PC-3 (cell line): ENCODE measurements at regions of chr15 and their contacts with region 1.

Region 1: DNA sequence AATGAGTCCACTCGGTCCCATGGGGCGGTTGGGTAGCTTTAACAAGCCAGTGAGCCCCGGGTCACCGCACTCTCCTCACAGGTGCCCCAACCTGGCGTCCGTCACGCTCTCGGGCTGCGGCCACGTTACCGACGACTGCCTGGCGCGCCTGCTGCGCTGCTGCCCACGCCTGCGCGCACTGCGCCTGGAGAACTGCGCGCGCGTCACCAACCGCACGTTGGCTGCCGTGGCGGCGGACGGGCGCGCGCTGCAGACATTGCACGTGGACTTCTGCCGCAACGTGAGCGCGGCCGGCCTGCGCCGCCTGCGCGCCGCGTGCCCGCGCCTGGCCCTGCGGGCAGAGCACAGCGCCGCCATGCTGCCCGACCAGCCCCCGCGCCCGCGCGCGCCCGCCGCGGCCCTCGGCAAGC is 3.4 kb downstream of the FBXL22 start:
- DNase-seq: peak; percentile 90
- ATAC-seq: peak; percentile 72
- H3K4me3 ChIP-seq: peak overlapping the region; percentile 94
- H3K27ac ChIP-seq: peak overlapping the region; percentile 5; the same call in 1 of the 2 replicates
- H3K4me1 ChIP-seq: peaks cover 7% of the 10 kb centered on the region; the same call in 1 of the 2 replicates
- H3K27me3 ChIP-seq: no peaks in the 10 kb centered on the region
- CTCF ChIP-seq: no peak

Region 2: DNA sequence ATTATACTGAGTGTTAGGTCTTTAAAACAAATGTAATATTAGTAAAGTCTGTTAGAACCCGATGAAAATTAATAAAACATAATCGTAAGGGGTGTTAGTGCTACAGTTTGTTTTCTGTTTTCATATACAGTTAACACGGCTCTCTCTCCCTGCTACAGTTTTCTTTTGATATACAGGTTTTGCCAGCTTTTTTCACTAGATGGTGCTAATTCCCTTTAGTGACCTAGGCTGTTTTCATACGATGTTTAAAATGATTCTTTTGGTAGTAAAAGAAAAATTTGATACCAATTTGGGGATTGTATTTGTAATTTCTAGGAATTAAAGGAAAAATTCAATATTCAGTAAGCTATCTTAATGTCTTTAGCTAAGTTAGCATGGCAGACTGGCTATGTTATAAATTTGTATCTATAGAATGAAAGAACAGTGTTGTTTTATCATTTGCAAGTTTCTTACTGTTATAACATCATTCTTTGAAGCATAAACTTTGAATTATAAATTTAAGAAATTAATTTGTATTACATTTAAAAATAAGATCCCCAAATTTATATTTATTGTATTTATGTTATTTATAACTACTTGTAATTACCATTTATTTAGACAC is 311.7 kb before region 1 on chr15:
- CTCF ChIA-PET with region 1: no interaction called
- POLR2A ChIA-PET with region 1: no interaction called
- intact Hi-C with region 1: loop called (anchors 5 kb)
- DNase-seq: peak; percentile 69
- ATAC-seq: no peak
- H3K4me3 ChIP-seq: no peak overlapping the region
- H3K27ac ChIP-seq: no peak overlapping the region
- H3K4me1 ChIP-seq: peaks cover 5% of the 10 kb centered on the region; the same call in 1 of the 2 replicates
- H3K27me3 ChIP-seq: no peaks in the 10 kb centered on the region
- CTCF ChIP-seq: peak; percentile 82

Region 3: DNA sequence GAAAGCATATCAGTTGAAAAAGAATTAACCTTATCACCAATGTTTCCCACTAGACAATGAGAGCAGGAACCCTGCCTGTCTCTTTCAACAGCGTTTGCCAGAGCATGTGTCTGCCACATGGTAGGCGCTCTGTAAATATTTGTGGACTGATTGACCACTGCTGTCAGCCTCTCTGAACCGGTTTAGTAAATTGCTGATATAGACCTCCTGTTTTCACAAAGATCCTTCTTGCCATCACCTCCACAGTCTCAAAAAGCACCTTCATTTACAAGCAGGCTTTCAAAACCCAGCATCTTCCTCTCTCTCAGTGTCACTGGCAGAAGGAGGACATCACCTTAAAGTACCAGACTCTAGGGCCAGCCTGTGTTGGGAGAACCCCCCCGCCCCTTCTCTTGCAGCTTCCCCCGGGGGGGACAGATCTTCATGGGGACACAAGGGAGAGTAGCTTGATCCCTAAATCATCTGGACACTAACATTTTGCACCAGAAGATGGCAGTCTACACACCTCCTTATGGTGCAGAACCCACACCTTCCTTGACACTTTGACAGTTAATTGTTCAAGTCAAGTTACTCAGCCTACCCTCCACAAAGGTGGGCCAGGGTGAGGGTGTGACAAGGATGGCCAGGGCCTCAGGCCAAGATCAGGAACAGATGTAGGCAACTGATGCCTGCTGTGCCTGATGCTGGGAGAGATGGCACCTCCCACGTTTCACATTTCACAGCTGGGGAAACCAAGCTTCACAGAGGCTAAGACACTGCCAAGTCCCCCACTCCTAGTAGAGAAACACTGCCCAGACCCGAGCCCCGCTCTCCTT is 134.0 kb before region 1 on chr15:
- CTCF ChIA-PET with region 1: no interaction called
- POLR2A ChIA-PET with region 1: interaction called, 3 read pairs
- intact Hi-C with region 1: loop called (anchors 1 kb)
- DNase-seq: peak; percentile 72
- ATAC-seq: peak; percentile 55
- H3K4me3 ChIP-seq: no peak overlapping the region
- H3K27ac ChIP-seq: no peak overlapping the region
- H3K4me1 ChIP-seq: peaks cover 21% of the 10 kb centered on the region
- H3K27me3 ChIP-seq: no peaks in the 10 kb centered on the region
- CTCF ChIP-seq: peak; percentile 75